Breast epithelium (tissue), 4 donors: ENCODE measurements at regions of chr4 and their contacts with region 1.

Region 1: DNA sequence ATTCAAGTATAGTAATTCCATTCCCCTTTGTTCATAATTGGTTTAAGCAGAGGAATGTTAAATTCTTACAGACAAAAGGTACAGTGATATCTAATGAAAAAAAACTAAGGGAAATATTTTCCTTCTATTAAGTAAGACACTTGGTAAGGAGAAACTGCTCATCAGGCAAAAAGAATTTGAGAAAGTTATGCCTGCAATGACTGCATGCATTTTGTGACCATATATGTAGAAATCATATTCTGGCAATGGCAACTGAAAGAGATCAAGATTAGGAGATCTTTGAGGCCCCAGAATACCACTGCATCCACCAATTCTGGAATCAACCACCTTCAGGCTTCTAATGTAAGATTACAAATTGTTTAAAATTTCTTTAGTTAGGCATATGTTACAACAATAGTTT is 364.8 kb downstream of the PCDH10 start:
- DNase-seq: no peak
- H3K4me3 ChIP-seq: no peak overlapping the region
- H3K27ac ChIP-seq: no peak overlapping the region
- H3K4me1 ChIP-seq: no peaks in the 10 kb centered on the region
- H3K27me3 ChIP-seq: no peaks in the 10 kb centered on the region
- CTCF ChIP-seq: no peak
- POLR2A ChIP-seq: no peak

Region 2: GRCh38 chr4:133559987-133560386 is 46.1 kb after region 1 on chr4:
- intact Hi-C with region 1: no loop called
- DNase-seq: no peak
- H3K4me3 ChIP-seq: no peak overlapping the region
- H3K27ac ChIP-seq: no peak overlapping the region
- H3K4me1 ChIP-seq: no peaks in the 10 kb centered on the region
- H3K27me3 ChIP-seq: no peaks in the 10 kb centered on the region
- CTCF ChIP-seq: no peak
- POLR2A ChIP-seq: no peak

Region 3: DNA sequence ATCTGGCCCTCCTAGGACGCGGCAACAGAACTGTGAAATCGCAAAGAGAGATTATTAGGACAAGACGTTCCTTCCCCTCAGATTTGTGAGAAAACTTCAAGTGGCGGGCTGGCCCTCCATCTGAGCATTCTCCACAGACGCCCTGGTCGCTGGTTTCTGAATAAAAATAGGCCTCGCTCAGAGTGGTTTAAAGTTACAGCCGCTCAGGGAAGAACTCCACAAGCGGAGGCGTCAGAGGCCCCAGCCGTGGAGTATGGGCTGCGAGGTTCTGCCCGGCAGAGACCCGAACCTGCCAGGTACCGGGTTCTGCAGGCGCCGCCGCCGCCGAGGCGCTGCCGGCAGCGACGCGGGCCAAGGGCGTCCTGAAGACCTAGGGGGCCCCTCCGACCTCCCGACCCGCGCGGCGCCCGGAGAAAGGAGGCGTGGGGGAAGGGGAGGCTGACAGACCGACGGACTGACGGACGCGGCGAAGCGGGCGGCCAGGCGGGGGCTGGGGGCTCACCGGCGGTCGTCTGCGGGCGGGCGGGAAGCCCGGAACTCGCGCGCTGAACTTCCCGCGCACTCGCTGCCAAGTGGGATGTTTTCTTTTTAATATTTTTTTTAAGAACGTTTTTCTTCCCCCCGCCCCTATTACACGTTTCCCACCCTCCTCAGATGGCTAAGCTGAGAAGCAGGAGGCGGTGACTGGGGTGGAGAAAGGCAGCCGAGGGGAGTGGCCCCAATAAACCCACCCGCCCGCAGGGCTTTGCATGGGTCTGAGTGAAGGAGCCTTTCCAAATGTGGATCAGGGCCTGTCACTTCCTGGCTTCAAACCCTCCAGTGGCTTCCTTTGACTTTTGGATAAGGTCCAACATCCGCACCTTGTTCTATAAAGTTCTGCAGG is 687.6 kb after region 1 on chr4 and contains the start of gene PABPC4L:
- intact Hi-C with region 1: loop called (anchors 10 kb)
- DNase-seq: no peak
- H3K4me3 ChIP-seq: peak within 1 kb of the TSS; percentile 57 to 79 (median 62)
- H3K27ac ChIP-seq: peak within 1 kb of the TSS; percentile 68 to 72
- H3K4me1 ChIP-seq: peaks cover 0 to 8% of the 10 kb centered on the region in 2 donors
- H3K27me3 ChIP-seq: no peaks in the 10 kb centered on the region
- CTCF ChIP-seq: no peak
- POLR2A ChIP-seq: no peak
- total RNA-seq, gene PABPC4L: 0.96 to 1.2 (median 0.98) TPM